Gastrocnemius medialis (tissue), 4 donors: ENCODE measurements at regions of chr5 and their contacts with region 1.

Region 1: DNA sequence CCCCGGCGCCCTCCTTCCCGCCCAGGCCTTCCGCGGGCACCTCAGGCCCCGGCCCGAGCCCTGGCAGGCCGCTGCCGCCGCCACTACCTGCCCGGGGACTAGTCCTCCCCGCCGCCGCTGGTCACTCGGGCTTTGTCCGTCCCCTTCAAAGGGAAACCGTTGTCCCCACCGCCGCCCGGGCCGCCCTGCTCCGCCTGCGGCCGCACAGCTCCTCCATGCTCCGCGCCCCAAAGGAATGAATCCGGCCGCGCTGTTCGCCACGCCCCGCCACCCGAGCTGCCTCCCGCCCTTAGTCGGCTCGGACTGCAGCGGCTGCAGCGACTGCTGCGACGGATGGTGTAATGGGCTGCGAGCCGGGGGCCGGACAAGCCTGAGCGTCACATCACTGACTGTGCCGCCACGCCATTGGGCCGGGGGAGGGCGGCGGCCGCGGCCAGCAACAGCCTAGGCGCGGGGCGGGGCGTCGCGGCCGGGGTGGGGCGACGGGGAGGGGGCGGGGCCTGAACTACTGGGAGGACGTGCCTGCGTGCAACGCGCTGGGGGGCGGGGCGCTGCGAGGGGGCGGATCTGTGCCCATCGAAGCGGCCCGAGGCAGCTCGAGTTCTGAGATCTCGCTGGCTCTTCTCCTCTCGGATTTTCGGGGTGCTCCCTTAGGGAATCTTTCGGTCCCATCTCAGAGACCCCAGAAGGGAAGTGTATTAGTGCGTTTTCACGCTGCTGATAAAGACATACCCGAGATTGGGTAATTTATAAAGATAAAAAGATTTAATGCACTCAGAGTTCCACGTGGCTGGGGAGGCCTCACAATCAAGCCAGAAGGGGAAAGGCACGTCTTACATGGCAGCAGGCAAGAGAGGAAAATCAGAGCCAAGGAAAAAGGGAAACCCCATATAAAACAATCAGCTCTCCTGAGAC is at the start of gene FEM1C:
- DNase-seq: peak; percentile 97
- ATAC-seq: peak; percentile 86 to 88
- H3K4me3 ChIP-seq: peak within 1 kb of the TSS; percentile 85 to 96 (median 88)
- H3K27ac ChIP-seq: peak within 1 kb of the TSS; percentile 96 to 99 (median 98)
- H3K4me1 ChIP-seq: peaks cover 18 to 21% of the 10 kb centered on the region in 2 donors
- H3K27me3 ChIP-seq: no peaks in the 10 kb centered on the region
- CTCF ChIP-seq: no peak
- POLR2A ChIP-seq: peak; percentile 99
- total RNA-seq, gene FEM1C: 18.9 to 39.4 (median 33.7) TPM

Region 2: DNA sequence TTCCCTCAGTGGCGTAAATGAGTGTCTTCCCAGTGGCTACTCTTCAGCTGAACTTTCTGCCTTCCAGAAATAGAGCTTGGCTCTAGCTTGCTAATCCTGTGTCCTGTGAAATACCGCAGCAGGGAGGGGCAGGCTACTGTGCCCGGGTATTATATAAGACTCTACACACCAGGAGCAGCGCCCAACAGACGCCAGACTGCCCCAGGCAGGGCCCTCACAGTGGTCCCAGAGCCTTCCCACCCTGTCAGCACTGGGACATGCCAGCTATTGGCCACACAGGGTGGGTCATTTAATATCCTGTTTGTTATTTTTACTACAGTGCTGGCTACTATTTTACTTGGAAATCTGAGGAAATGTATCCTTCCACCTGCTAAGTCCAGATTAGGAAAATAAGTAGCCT is 121.2 kb before region 1 on chr5:
- in situ Hi-C with region 1: no loop called
- intact Hi-C with region 1: loop called (anchors 2 kb)
- DNase-seq: peak; percentile 72 to 91
- ATAC-seq: peak; percentile 94 to 99
- H3K4me3 ChIP-seq: no peak overlapping the region
- H3K27ac ChIP-seq: peak overlapping the region; percentile 81 to 86 (median 84)
- H3K4me1 ChIP-seq: peaks cover 51 to 60% of the 10 kb centered on the region in 2 donors
- H3K27me3 ChIP-seq: no peaks in the 10 kb centered on the region
- CTCF ChIP-seq: no peak
- POLR2A ChIP-seq: peak; percentile 31 to 43

Region 3: DNA sequence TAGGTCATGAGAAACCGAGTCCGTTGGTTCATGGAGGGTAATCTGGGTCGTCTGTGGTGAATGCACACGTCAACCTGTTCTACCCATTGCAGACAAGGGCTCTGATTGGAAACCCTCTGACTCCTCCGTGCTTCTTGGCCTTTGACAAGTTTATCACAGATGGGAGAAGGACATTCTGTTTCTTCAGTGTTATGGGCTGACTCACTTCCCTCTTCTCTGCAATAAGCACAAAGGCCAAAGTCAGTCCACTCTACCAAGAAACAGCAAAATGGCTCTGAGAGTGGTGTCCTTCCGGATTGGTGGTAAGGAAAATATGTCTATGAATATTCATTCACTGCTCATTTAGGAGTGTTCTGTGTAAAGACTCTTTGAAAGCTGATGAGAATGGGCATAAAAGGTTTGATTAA is 89.4 kb before region 1 on chr5:
- in situ Hi-C with region 1: no loop called
- intact Hi-C with region 1: loop called (anchors 1 kb)
- DNase-seq: peak; percentile 79 to 84
- ATAC-seq: peak; percentile 95 to 96
- H3K4me3 ChIP-seq: no peak overlapping the region
- H3K27ac ChIP-seq: peak overlapping the region; percentile 69 to 86 (median 79)
- H3K4me1 ChIP-seq: peaks cover 40 to 50% of the 10 kb centered on the region in 2 donors
- H3K27me3 ChIP-seq: no peaks in the 10 kb centered on the region
- CTCF ChIP-seq: no peak
- POLR2A ChIP-seq: peak in 1 of 2 donors; percentile 19

Region 4: GRCh38 chr5:115460472-115460871 is 84.2 kb before region 1 on chr5:
- in situ Hi-C with region 1: no loop called
- intact Hi-C with region 1: loop called (anchors 1 kb)
- DNase-seq: peak; percentile 62 to 76
- ATAC-seq: peak; percentile 78 to 85
- H3K4me3 ChIP-seq: no peak overlapping the region
- H3K27ac ChIP-seq: peak overlapping the region; percentile 64 to 80 (median 74)
- H3K4me1 ChIP-seq: peaks cover 42 to 46% of the 10 kb centered on the region in 2 donors
- H3K27me3 ChIP-seq: no peaks in the 10 kb centered on the region
- CTCF ChIP-seq: no peak
- POLR2A ChIP-seq: peak; percentile 25 to 49

Region 5: GRCh38 chr5:115625579-115626444 is 81.1 kb after region 1 on chr5 and contains the start of gene TMED7:
- in situ Hi-C with region 1: no loop called
- intact Hi-C with region 1: loop called (anchors 5 kb)
- DNase-seq: peak; percentile 99
- ATAC-seq: peak; percentile 97
- H3K4me3 ChIP-seq: peak within 1 kb of the TSS; percentile 75 to 99 (median 84)
- H3K27ac ChIP-seq: peak within 1 kb of the TSS; percentile 87 to 97 (median 95)
- H3K4me1 ChIP-seq: peaks cover 35% of the 10 kb centered on the region in 2 donors
- H3K27me3 ChIP-seq: no peaks in the 10 kb centered on the region
- CTCF ChIP-seq: peak in 2 of 5 experiments; percentile 12 to 38
- POLR2A ChIP-seq: peak; percentile 83 to 92
- total RNA-seq, gene TMED7: 53.1 to 122 (median 68.6) TPM

Region 6: DNA sequence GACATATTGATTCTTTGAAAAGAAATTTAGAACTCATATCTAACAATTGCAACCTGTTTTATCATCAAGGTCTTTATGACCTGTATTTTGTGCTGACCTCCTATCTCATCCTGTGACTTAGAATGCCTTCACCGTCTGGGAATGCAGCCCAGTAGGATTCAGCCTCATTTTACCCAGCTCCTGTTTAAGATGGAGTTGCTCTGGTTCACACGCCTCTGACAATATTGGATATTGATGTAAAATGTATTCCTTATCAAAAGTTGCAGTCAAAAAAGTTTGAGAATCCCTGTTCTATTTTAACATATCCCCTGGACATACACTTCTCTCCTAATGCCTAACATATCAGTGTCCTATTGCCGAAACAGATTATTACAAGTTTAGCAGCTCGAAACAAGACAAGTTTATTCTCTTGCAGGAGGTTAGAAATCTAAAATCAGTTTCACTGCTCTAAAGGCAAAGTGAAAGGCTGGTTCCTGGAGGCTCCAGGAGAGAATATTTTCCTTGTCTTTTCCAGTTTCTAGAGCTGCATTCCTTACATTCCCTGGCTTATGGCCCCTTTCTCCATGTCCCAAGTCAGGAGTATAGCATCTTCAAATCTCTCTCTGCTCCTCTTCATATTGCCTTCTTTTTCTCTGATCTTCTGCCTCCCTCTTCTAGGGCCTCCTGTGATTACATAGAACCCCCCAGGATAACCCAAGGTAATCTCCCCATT is 386.1 kb after region 1 on chr5:
- in situ Hi-C with region 1: no loop called
- intact Hi-C with region 1: no loop called
- DNase-seq: no peak
- ATAC-seq: no peak
- H3K4me3 ChIP-seq: no peak overlapping the region
- H3K27ac ChIP-seq: no peak overlapping the region
- H3K4me1 ChIP-seq: no peaks in the 10 kb centered on the region
- H3K27me3 ChIP-seq: no peaks in the 10 kb centered on the region
- CTCF ChIP-seq: no peak
- POLR2A ChIP-seq: no peak